SK-N-SH (cell line): ENCODE measurements at regions of chr15 and their contacts with region 1.

Region 1: GRCh38 chr15:72155635-72156616 is 37.7 kb downstream of the SENP8 start:
- DNase-seq: peak; percentile 75
- H3K4me3 ChIP-seq: peak overlapping the region; percentile 47 to 63
- H3K27ac ChIP-seq: 0 out of 4 replicates have a peak overlapping the region, but pooled peaks of 1 of the 2 experiments have one; percentile 4
- H3K4me1 ChIP-seq: peaks cover 10% of the 10 kb centered on the region in 2 experiments; a peak in 1 of 4 replicates
- H3K27me3 ChIP-seq: no peaks in the 10 kb centered on the region
- CTCF ChIP-seq: peak; percentile 86
- EP300 ChIP-seq: no peak; a peak in 1 of 4 replicates
- RAD21 ChIP-seq: peak; percentile 97

Region 2: GRCh38 chr15:71737761-71738160 is 418.2 kb before region 1 on chr15:
- CTCF ChIA-PET with region 1: interaction called, 59 read pairs
- POLR2A ChIA-PET with region 1: no interaction called
- DNase-seq: no peak
- H3K4me3 ChIP-seq: no peak overlapping the region
- H3K27ac ChIP-seq: no peak overlapping the region
- H3K4me1 ChIP-seq: no peaks in the 10 kb centered on the region; a peak in 1 of 4 replicates
- H3K27me3 ChIP-seq: no peaks in the 10 kb centered on the region
- CTCF ChIP-seq: no peak
- EP300 ChIP-seq: no peak
- RAD21 ChIP-seq: no peak

Region 3: GRCh38 chr15:71752604-71753289 is 403.2 kb before region 1 on chr15:
- CTCF ChIA-PET with region 1: interaction called, 27 read pairs
- POLR2A ChIA-PET with region 1: no interaction called
- DNase-seq: peak; percentile 55
- H3K4me3 ChIP-seq: no peak overlapping the region
- H3K27ac ChIP-seq: peak overlapping the region; percentile 3 to 68; a peak in 3 of 4 replicates
- H3K4me1 ChIP-seq: peaks cover 0 to 25% of the 10 kb centered on the region in 2 experiments; a peak in 2 of 4 replicates
- H3K27me3 ChIP-seq: no peaks in the 10 kb centered on the region
- CTCF ChIP-seq: peak; percentile 75
- EP300 ChIP-seq: peak in 1 of 2 experiments; percentile 85; a peak in 1 of 4 replicates
- RAD21 ChIP-seq: peak; percentile 59

Region 4: GRCh38 chr15:71792521-71792920 is 363.4 kb before region 1 on chr15:
- CTCF ChIA-PET with region 1: interaction called, 10 read pairs
- POLR2A ChIA-PET with region 1: no interaction called
- DNase-seq: no peak
- H3K4me3 ChIP-seq: no peak overlapping the region
- H3K27ac ChIP-seq: peak overlapping the region in 1 of 2 experiments; percentile 45; a peak in 2 of 4 replicates
- H3K4me1 ChIP-seq: peaks cover 0 to 6% of the 10 kb centered on the region in 2 experiments; a peak in 2 of 4 replicates
- H3K27me3 ChIP-seq: no peaks in the 10 kb centered on the region
- CTCF ChIP-seq: no peak
- EP300 ChIP-seq: no peak
- RAD21 ChIP-seq: no peak

Region 5: DNA sequence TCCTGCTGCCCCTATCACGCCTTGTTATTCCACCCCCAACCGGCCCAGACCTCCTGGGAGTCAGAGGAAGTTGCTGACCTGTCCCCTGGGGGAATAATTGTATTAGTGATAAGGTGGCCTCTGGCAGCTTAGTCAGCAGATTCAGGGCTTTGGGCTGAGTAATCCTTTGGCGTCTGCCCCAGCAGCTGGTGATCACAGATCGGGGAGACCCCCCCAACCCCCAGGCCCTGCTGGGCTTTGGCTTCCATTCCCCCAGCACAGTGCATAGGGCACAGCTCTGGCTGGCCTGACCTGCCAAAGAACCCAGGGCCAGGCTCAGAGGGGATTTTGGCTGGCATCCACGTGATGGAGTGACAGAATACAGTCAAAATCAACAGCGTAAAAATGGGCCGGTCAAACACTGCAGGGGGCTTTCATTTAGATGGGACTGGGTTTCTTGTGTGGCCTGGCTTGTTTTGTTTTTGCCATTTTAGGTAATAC is 349.4 kb before region 1 on chr15:
- CTCF ChIA-PET with region 1: interaction called, 28 read pairs
- POLR2A ChIA-PET with region 1: no interaction called
- DNase-seq: peak; percentile 73
- H3K4me3 ChIP-seq: no peak overlapping the region
- H3K27ac ChIP-seq: no peak overlapping the region
- H3K4me1 ChIP-seq: peaks cover 21 to 24% of the 10 kb centered on the region in 2 experiments; a peak in 3 of 4 replicates
- H3K27me3 ChIP-seq: no peaks in the 10 kb centered on the region
- CTCF ChIP-seq: no peak
- EP300 ChIP-seq: peak; percentile 21 to 44; a peak in 2 of 4 replicates
- RAD21 ChIP-seq: no peak

Region 6: GRCh38 chr15:72127724-72128322 is 28.1 kb before region 1 on chr15:
- CTCF ChIA-PET with region 1: interaction called, 11 read pairs
- POLR2A ChIA-PET with region 1: interaction called, 3 read pairs
- DNase-seq: no peak
- H3K4me3 ChIP-seq: no peak overlapping the region
- H3K27ac ChIP-seq: no peak overlapping the region
- H3K4me1 ChIP-seq: no peaks in the 10 kb centered on the region; a peak in 1 of 4 replicates
- H3K27me3 ChIP-seq: no peaks in the 10 kb centered on the region
- CTCF ChIP-seq: no peak
- EP300 ChIP-seq: no peak
- RAD21 ChIP-seq: no peak

Region 7: DNA sequence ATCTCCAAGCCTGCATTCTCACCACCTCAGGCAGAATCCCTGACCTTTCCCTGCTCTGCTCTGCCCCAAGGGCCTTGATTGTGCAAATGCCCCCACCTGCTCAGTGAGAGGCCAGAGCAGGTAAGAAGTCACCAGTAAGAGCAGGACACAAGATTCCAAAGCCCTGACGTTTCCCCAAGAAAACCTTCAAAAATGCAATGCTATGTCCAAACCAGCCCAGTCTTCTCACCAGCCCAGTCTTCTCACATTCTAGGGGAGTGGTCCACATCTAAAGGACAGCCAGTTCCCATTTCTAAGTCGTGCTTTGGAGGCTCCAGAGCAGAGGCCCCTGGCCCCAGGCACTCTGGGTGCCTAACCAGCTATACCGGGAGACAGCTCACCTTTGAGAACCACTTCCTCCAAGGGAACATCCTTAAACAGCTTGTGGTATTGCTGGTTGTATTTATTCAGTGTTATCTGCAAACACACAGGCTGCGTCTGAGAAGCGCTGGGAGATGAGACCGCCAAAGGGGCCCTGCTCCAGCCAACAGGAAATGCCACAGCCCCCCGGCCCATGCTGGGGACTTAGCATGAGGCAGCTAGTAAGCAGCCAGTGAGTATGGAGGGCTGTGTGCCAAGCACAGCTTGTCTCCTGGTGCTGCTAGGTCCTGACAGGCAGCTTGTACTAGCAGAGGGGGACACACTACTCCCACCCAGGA is 12.3 kb after region 1 on chr15:
- CTCF ChIA-PET with region 1: interaction called, 23 read pairs
- POLR2A ChIA-PET with region 1: no interaction called
- DNase-seq: no peak
- H3K4me3 ChIP-seq: no peak overlapping the region
- H3K27ac ChIP-seq: no peak overlapping the region
- H3K4me1 ChIP-seq: peaks cover 0 to 6% of the 10 kb centered on the region in 2 experiments; a peak in 1 of 4 replicates
- H3K27me3 ChIP-seq: no peaks in the 10 kb centered on the region
- CTCF ChIP-seq: no peak
- EP300 ChIP-seq: no peak
- RAD21 ChIP-seq: no peak

Region 8: DNA sequence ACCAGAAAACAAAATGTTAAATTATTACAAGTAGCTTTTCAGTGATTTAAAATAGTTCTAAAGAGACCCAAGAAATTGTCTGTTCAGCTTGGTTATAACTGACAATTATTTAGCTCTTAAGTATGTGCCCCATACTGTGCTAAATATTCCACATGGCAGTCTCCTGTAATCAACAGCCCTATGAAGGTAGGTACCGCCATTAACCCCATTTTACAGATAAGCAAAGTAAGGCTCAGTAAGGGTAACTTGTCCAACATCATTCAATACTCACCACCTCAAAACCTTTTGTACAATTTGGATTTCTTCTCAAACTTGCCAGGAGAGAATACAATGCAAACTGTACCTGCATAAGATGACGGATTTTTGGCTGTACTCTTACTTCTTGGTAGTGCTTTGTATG is 593.8 kb after region 1 on chr15:
- CTCF ChIA-PET with region 1: no interaction called
- POLR2A ChIA-PET with region 1: no interaction called
- DNase-seq: no peak
- H3K4me3 ChIP-seq: no peak overlapping the region
- H3K27ac ChIP-seq: no peak overlapping the region
- H3K4me1 ChIP-seq: peaks cover 0 to 3% of the 10 kb centered on the region in 2 experiments; a peak in 1 of 4 replicates
- H3K27me3 ChIP-seq: no peaks in the 10 kb centered on the region
- CTCF ChIP-seq: no peak
- EP300 ChIP-seq: no peak
- RAD21 ChIP-seq: no peak